ENCODE measurements at regions of chr1 and their contacts with region 1.

Region 1: GRCh38 chr1:182962554-182963115 is 9.7 kb upstream of the SHCBP1L start:
- DNase-seq: peak; percentile 83

Region 2: DNA sequence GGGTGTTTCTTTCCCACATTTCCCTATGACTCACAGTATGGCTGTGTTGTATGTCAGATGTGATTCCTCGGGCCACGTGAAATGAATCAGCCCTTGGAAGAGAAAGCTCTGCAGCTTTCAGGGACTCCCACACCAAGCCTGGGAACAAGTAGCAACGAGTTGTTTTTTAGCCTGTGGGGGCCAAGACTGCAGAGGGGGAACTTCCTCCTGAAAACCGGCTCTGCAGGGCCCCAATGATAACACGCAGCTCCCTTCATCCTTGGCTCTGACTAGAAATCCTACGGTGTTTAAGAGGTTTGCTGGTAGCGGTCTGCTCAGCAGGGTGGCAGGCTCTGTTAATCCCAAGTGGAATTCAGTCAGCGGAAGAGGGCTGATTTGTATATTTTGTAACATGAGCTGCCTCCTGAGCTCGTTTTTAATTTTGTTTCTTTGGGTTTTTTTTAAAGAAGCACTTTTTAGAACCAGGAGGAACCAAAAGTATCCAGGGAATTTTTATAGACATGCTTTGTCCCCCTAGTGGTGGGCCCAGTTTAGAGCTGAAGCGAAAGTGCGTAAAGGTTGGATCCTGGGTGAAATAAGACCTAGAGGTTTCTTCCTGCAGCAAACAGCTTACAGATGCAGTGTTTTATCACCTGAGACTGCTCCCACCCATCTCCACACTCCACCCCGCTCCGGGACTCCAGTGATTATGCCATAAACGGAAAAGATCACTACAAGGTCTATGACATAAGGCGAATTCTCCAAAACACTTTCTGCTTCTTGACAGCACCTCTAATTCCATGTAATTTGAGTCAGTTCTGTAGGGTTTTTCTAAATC is 272.2 kb after region 1 on chr1:
- intact Hi-C with region 1: loop called (anchors 2 kb)
- DNase-seq: no peak

Region 3: GRCh38 chr1:183318433-183318832 is 355.8 kb after region 1 on chr1:
- intact Hi-C with region 1: loop called (anchors 2 kb)
- DNase-seq: peak; percentile 84

Region 4: DNA sequence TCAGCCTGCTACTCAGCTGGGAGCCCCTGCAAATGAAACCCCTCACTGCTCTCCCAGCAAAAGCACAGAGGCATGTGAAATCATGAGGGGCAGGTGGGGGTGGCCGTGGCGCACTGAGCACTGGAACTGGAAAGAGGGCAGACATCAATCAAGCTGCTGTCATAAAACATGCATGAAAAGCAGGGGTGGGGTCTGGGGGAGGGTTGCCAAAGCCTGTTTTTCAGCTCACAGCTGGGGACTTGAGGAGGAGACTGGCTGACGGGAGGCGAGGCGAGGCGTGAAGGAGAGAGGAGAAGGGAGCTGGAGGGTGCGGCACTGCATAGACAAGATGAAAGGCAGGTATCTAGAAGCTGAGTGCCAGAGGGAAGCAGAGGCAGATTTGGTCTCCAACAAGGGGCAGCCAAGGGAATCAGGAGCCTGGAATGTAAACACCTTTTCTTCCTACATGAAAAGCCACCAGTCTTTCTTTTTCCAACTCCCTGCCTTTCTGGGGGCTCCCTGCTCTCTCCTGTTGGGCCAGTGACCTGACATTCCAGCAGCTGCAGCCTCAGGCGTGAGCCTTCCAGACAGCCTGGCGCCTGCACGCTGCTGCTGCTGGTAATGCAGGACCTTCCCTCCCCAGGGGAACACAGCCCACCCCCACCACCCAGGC is 368.6 kb after region 1 on chr1:
- intact Hi-C with region 1: no loop called
- DNase-seq: no peak

Measured in cardiac septum (tissue), 1 donor.